B cell (primary cell): ENCODE measurements at regions of chr1 and their contacts with region 1.

Region 1: DNA sequence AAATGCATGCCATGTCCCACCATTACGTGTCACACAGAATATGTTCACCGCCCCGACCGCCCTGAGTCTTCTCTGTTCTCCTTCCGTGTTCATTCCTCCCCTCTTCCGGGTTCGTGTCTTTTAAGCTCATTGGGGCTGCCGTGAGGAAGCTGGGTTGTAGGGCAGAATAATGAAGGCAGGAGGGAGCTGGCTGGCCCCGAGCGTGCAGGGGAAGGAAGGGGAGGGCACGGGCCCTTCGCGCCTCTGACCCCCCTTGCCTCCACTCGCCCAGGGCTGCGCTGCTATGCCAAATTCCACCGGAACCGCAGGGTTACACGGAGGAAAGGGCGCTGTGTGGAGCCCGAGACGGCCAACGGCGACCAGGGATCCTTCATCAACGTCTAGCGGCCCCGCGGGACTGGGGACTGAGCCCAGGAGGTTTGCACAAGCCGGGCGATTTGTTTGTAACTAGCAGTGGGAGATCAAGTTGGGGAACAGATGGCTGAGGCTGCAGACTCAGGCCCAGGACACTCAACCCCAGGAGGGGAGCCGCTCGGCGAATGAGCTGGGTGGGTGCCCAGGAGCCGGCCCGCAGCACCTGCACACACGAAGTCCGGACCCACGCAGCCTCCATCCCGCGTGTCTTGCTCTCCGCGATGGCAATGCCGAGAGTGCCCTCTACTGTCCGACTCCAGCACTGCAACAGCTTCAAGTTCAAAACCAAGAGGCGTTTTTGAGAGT is 16.5 kb upstream of the AGTRAP start:
- DNase-seq: peak; percentile 91
- ATAC-seq: peak; percentile 88
- H3K4me3 ChIP-seq: peak overlapping the region in 4 of 5 experiments; percentile 43 to 67 (median 63)
- H3K4me3 Mint-ChIP-seq: peak overlapping the region; percentile 72
- H3K27ac ChIP-seq: peak overlapping the region; percentile 54 to 73
- H3K27ac Mint-ChIP-seq: peak overlapping the region; percentile 96
- H3K4me1 ChIP-seq: peaks cover 8 to 13% of the 10 kb centered on the region in 2 donors
- H3K4me1 Mint-ChIP-seq: peaks cover 13% of the 10 kb centered on the region
- H3K27me3 ChIP-seq: no peaks in the 10 kb centered on the region
- H3K27me3 Mint-ChIP-seq: no peaks in the 10 kb centered on the region
- CTCF ChIP-seq: peak; percentile 95

Region 2: DNA sequence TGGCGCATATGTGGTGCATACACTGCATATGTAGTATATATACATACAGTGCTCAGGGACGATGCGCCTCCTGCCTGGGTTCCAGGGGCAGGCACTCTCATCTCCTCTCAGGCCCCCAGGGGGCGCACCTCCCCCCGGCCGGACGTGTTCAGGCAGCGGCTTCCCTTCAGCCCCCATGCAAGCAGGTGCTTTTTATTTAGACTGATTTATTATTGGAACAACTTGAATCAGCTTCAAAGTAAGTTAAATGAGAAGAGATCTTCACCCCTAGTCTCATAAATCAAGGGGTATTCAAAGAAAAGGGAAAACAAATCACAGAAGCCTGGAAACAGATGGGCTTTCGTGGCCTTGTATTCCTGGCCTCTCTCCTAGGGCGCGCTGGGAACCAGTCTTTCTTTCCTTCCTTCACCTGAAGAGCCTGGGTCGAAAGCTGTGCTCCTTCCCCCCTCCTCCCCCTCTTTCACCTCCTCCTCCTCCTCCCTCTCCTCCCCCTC is 381.8 kb before region 1 on chr1:
- CTCF ChIA-PET with region 1: interaction called, 6 read pairs
- POLR2A ChIA-PET with region 1: no interaction called
- intact Hi-C with region 1: loop called (anchors 5 kb)
- DNase-seq: peak; percentile 72
- ATAC-seq: peak; percentile 56
- H3K4me3 ChIP-seq: no peak overlapping the region
- H3K4me3 Mint-ChIP-seq: no peak overlapping the region
- H3K27ac ChIP-seq: no peak overlapping the region
- H3K27ac Mint-ChIP-seq: no peak overlapping the region
- H3K4me1 ChIP-seq: peaks cover 16 to 23% of the 10 kb centered on the region in 2 donors
- H3K4me1 Mint-ChIP-seq: peaks cover 23% of the 10 kb centered on the region
- H3K27me3 ChIP-seq: peaks cover 0 to 20% (median 6%) of the 10 kb centered on the region in 4 experiments
- H3K27me3 Mint-ChIP-seq: peaks cover 23% of the 10 kb centered on the region
- CTCF ChIP-seq: peak; percentile 87

Region 3: DNA sequence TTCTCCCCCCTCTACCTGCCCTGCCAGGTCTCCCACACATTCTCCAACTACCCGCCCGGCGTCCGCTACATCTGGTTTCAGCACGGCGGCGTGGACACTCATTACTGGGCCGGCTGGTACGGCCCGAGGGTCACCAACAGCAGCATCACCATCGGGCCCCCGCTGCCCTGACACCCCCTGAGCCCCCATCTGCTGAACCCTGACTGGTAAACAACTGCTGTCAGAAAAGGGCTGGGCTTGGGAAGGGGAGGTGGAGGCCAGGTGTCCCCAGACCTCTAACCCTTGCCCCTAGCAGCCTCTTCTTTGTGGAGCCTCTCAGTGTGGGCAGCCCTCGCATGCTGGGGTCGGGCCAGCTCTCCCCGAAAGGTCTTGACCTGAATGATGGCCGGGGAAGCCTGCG is 58.4 kb before region 1 on chr1:
- CTCF ChIA-PET with region 1: interaction called, 231 read pairs
- POLR2A ChIA-PET with region 1: interaction called, 27 read pairs
- intact Hi-C with region 1: loop called (anchors 1 kb)
- DNase-seq: no peak
- ATAC-seq: no peak
- H3K4me3 ChIP-seq: no peak overlapping the region
- H3K4me3 Mint-ChIP-seq: no peak overlapping the region
- H3K27ac ChIP-seq: no peak overlapping the region
- H3K27ac Mint-ChIP-seq: no peak overlapping the region
- H3K4me1 ChIP-seq: peaks cover 0 to 9% of the 10 kb centered on the region in 2 donors
- H3K4me1 Mint-ChIP-seq: peaks cover 3% of the 10 kb centered on the region
- H3K27me3 ChIP-seq: no peaks in the 10 kb centered on the region
- H3K27me3 Mint-ChIP-seq: no peaks in the 10 kb centered on the region
- CTCF ChIP-seq: no peak

Region 4: GRCh38 chr1:11707621-11708276 is 11.7 kb before region 1 on chr1:
- CTCF ChIA-PET with region 1: interaction called, 11 read pairs
- POLR2A ChIA-PET with region 1: interaction called, 4 read pairs
- intact Hi-C with region 1: no loop called
- DNase-seq: no peak
- ATAC-seq: no peak
- H3K4me3 ChIP-seq: no peak overlapping the region
- H3K4me3 Mint-ChIP-seq: no peak overlapping the region
- H3K27ac ChIP-seq: no peak overlapping the region
- H3K27ac Mint-ChIP-seq: no peak overlapping the region
- H3K4me1 ChIP-seq: no peaks in the 10 kb centered on the region
- H3K4me1 Mint-ChIP-seq: no peaks in the 10 kb centered on the region
- H3K27me3 ChIP-seq: peaks cover 0 to 12% (median 0%) of the 10 kb centered on the region in 4 experiments
- H3K27me3 Mint-ChIP-seq: peaks cover 13% of the 10 kb centered on the region
- CTCF ChIP-seq: no peak

Region 5: GRCh38 chr1:11730429-11730891 is 11.0 kb after region 1 on chr1:
- CTCF ChIA-PET with region 1: interaction called, 39 read pairs
- POLR2A ChIA-PET with region 1: interaction called, 9 read pairs
- intact Hi-C with region 1: loop called (anchors 1 kb)
- DNase-seq: peak; percentile 76
- ATAC-seq: peak; percentile 87
- H3K4me3 ChIP-seq: peak overlapping the region; percentile 32 to 73 (median 44)
- H3K4me3 Mint-ChIP-seq: peak overlapping the region; percentile 89
- H3K27ac ChIP-seq: peak overlapping the region; percentile 69 to 84
- H3K27ac Mint-ChIP-seq: peak overlapping the region; percentile 96
- H3K4me1 ChIP-seq: peaks cover 36 to 41% of the 10 kb centered on the region in 2 donors
- H3K4me1 Mint-ChIP-seq: peaks cover 34% of the 10 kb centered on the region
- H3K27me3 ChIP-seq: no peaks in the 10 kb centered on the region
- H3K27me3 Mint-ChIP-seq: no peaks in the 10 kb centered on the region
- CTCF ChIP-seq: no peak

Region 6: GRCh38 chr1:11735854-11736745 is 16.6 kb after region 1 on chr1 and contains the start of gene AGTRAP:
- CTCF ChIA-PET with region 1: interaction called, 39 read pairs
- POLR2A ChIA-PET with region 1: interaction called, 9 read pairs
- intact Hi-C with region 1: loop called (anchors 2 kb)
- DNase-seq: peak; percentile 94
- ATAC-seq: peak; percentile 90
- H3K4me3 ChIP-seq: peak within 1 kb of the TSS; percentile 67 to 99 (median 98)
- H3K4me3 Mint-ChIP-seq: peak within 1 kb of the TSS; percentile 97
- H3K27ac ChIP-seq: peak within 1 kb of the TSS; percentile 14 to 83
- H3K27ac Mint-ChIP-seq: peak within 1 kb of the TSS; percentile 93
- H3K4me1 ChIP-seq: peaks cover 33 to 42% of the 10 kb centered on the region in 2 donors
- H3K4me1 Mint-ChIP-seq: peaks cover 42% of the 10 kb centered on the region
- H3K27me3 ChIP-seq: no peaks in the 10 kb centered on the region
- H3K27me3 Mint-ChIP-seq: no peaks in the 10 kb centered on the region
- CTCF ChIP-seq: no peak
- total RNA-seq, gene AGTRAP: 18.3 and 20.2 TPM in 2 replicates

Region 7: GRCh38 chr1:12424087-12424529 is 704.6 kb after region 1 on chr1:
- CTCF ChIA-PET with region 1: no interaction called
- POLR2A ChIA-PET with region 1: no interaction called
- intact Hi-C with region 1: no loop called
- DNase-seq: no peak
- ATAC-seq: no peak
- H3K4me3 ChIP-seq: no peak overlapping the region
- H3K4me3 Mint-ChIP-seq: no peak overlapping the region
- H3K27ac ChIP-seq: no peak overlapping the region
- H3K27ac Mint-ChIP-seq: no peak overlapping the region
- H3K4me1 ChIP-seq: no peaks in the 10 kb centered on the region
- H3K4me1 Mint-ChIP-seq: no peaks in the 10 kb centered on the region
- H3K27me3 ChIP-seq: no peaks in the 10 kb centered on the region
- H3K27me3 Mint-ChIP-seq: no peaks in the 10 kb centered on the region
- CTCF ChIP-seq: no peak